ENCODE measurements at regions of chr18 and their contacts with region 1.

Region 1: DNA sequence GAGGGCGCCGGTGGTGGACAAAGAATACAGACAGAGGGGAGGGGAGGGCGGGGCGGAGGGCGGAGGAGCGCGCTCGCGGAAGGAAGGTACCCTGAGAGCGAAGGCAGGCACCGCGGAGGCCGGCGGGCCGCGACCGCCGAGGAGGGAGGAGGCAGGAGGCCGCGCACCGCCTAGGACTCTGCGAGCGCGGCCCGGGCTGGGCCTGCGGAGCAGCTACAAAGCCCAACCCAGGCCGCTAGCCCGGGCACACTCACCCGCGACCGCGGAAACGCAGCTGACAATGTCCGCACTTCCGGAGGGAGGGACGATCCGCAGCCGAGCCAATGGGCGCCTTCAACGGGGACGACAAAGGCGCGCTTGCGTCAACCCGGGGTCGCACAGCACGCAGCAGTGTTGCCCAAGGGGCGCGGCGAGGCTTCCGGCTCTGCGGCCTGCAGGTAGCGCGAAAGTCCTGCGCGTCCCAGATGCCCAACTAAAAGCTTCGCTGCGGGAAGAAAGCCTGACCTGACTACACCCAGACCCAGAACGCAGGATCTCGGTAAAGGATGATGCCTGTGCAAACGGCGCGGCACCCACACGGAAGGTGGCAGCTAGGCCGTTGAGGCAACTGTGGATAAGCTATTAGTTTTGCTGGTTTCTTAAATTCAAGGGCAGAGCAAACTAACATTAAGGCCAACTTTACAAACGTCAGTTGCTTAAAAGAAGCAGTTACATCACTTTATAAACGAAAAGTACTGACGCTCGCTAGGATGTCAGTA is at the start of gene C18orf32:
- DNase-seq: peak; percentile 75

Region 2: DNA sequence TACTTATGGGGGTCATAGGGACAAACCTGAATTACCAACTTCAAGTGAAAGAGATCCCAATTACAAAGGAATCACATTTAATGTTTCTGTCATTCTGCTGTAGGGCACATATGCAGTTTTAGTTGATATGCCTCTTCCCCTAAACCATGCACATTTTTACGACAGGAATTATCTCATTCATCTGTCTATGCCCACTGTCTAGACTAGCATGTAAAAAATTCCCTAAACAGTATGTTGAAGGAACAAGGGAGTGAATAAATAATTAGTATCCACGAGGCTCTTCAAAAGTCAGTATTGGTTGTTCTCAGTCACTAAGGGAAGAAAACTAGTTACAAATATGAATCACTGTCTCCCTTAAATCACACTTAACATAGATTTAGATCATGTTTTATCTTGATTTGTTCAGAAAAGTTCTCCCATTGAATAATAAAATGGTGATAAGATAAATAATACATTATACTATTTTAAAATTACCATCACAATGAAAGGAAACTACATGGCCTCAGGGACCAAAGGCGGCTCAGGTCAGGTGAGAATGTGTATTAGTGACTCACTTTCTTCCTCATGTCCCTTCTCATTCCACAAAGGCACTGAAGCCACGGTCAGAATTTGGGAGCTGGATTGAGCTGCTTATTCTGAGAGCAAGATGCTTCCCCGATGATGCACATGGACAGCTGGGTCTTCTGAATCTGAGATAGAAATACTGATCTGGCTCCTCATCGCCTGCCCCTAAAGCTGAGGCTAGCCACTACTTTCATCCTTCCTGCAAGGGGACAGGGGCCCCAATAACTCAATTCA is 55.8 kb before region 1 on chr18:
- CTCF ChIA-PET with region 1: no interaction called
- POLR2A ChIA-PET with region 1: no interaction called
- DNase-seq: no peak

Region 3: GRCh38 chr18:49467019-49467563 is 20.0 kb before region 1 on chr18:
- CTCF ChIA-PET with region 1: interaction called, 3 read pairs
- POLR2A ChIA-PET with region 1: interaction called, 10 read pairs
- DNase-seq: no peak

Measured in HEK293T (cell line).